ENCODE measurements at regions of chr14 and their contacts with region 1.

Region 1: DNA sequence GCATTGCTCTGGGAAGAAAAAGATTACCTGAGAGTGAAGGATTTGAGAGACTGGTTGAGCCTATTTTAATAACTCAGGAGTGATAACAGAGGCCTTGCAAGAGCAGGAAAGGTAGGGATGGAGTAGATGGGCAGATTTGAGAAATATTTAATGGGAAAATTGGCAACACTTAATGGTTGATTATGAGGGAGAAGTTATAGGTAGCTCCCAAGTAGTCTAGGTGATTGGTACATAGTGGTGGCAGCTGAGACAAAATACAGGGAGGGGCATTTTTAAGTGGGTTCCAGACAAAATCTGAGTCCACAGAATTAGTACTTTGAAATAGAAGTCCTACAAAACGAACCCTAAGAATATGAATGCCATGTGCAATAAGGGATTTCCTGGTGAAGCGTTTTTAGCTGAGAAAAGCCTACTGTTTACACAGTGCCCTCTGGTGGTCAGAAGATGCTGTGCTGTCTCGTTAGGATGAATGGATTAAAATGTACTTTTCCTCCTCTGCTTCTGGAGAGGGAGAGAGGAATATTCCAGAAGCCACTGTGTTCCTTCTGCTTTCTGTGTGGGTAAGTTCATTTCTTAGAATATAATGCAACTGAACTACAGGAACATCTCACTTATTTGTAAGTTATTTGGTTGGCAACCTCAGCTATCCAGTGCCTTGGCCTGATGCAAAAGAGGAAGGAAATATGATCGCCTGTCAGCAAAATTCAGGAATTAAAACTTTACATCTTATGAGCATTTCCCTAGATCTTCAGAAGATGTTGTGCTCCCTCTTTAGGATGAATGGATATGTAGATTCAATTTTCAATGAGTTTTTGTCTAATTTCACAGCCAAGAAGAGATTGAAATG is 6.5 kb downstream of the ZBTB1 start:
- DNase-seq: peak; percentile 31
- CTCF ChIP-seq: peak; percentile 89

Region 2: DNA sequence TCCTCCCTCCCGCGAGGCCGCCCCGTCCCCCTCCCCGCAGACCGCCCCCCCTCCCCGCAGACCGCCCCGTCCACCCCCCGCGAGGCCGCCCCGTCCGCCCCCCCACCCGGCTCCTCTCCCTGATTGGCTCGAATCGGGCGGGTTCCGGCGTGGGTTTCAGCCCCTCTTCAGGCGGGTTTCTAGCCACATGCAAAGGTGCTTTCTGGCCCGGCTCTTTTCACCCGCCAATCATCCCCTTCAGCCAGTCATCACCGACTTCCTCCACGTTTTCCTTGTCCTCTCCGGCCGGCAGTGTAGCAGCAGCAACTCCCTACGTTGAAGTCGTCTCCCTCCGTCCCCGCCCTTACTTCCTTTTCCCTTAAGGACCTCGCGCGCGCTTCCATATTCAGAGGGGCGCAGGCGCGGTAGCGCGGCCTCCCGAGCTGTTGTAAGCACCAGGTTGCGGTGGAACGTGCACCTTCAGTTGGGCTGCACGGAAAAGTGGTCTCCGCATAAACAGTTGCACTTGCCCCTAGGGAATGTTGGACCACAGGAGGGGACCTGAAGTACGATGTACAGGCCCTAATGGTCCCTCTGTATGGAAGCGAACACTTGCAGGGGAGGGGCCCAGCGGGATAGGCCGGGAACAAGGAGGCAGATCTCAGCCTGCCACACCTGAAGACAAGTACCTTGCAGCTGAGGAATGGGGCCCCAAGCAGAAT is 172.3 kb before region 1 on chr14:
- CTCF ChIA-PET with region 1: interaction called, 22 read pairs
- POLR2A ChIA-PET with region 1: no interaction called
- DNase-seq: peak; percentile 97
- CTCF ChIP-seq: no peak

Region 3: GRCh38 chr14:64438181-64438841 is 72.7 kb before region 1 on chr14:
- CTCF ChIA-PET with region 1: interaction called, 40 read pairs
- POLR2A ChIA-PET with region 1: no interaction called
- DNase-seq: no peak
- CTCF ChIP-seq: no peak

Region 4: DNA sequence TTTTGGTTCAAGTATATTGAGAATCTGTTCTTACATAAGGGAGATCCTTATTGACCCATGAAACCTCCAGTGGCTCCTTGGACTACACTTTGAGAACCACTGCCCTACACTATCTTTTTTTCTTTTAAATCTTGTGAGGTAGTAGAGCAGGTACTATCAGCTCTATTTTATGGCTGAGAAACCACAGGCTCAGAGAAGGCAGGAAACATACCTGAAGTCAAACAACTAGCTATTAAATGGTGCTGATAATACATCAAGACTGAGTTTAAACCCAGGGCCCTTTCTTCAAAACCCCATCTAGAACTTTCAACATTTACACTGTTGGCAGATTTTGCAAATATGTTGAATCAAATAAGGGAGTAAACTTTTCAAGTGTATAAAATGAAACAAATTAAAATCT is 14.3 kb before region 1 on chr14:
- CTCF ChIA-PET with region 1: interaction called, 24 read pairs
- POLR2A ChIA-PET with region 1: interaction called, 3 read pairs
- DNase-seq: no peak
- CTCF ChIP-seq: no peak

Region 5: GRCh38 chr14:64536488-64537245 is 25.6 kb after region 1 on chr14:
- CTCF ChIA-PET with region 1: interaction called, 22 read pairs
- POLR2A ChIA-PET with region 1: interaction called, 4 read pairs
- DNase-seq: no peak
- CTCF ChIP-seq: no peak